Stomach (tissue), 19 donors: ENCODE measurements at regions of chr3 and their contacts with region 1.

Region 1: DNA sequence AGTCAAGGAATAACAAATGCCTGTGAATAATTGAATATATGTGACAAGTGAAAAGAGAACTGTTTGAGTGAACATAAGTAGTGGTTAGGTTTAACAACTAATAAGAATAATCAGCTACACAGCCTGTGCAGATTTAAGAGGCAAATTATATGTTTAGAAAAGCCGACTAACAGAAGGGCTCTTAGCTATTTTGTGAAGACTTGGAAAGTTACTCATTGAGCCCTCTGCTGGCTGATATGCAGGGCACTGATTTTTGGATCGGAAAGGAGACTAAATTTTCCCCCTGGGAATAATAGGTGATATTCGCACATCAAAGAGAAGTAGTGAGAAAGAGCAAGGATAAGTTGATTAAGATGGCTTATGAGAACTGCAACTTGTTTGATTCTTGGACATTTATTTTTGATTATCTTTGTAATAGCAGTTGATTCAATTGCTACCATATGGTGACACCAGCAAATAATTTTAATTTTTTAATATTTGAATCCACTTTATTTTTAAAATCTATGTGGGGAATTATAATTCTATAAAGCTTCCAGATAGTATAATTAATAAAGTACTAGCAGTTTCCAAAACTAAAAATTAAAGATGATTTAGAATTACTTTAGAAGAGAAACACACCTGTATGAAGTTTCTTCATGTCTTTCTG is 156.2 kb downstream of the NLGN1 start:
- DNase-seq: peak in 1 of 2 donors; percentile 61
- H3K4me3 ChIP-seq: no peak overlapping the region
- H3K27ac ChIP-seq: no peak overlapping the region
- H3K4me1 ChIP-seq: peaks cover 0 to 6% (median 3%) of the 10 kb centered on the region in 4 donors
- H3K27me3 ChIP-seq: no peaks in the 10 kb centered on the region
- CTCF ChIP-seq: peak in 4 of 7 experiments; percentile 40 to 68 (median 52)
- EP300 ChIP-seq: no peak
- POLR2A ChIP-seq: no peak

Region 2: DNA sequence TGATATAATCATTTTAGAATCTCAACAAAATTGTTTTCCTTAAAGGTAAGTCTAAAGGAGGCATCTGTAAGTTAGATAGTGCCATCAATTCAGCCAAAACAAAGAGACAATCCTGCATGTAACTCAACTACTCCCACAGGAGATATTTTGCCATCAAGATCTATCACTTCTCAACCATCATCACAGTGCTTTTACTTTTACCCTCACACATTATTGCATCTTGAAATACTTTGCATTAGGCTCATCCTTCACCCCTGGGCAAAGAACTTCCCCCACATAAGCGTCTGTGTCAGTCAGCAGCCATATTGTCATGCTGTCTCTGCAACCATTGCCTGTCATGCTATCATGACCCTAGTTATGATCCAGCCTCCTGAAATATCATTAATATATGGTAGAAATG is 211.1 kb before region 1 on chr3:
- intact Hi-C with region 1: no loop called
- DNase-seq: no peak
- H3K4me3 ChIP-seq: no peak overlapping the region
- H3K27ac ChIP-seq: no peak overlapping the region
- H3K4me1 ChIP-seq: no peaks in the 10 kb centered on the region
- H3K27me3 ChIP-seq: no peaks in the 10 kb centered on the region
- CTCF ChIP-seq: no peak
- EP300 ChIP-seq: no peak
- POLR2A ChIP-seq: no peak

Region 3: DNA sequence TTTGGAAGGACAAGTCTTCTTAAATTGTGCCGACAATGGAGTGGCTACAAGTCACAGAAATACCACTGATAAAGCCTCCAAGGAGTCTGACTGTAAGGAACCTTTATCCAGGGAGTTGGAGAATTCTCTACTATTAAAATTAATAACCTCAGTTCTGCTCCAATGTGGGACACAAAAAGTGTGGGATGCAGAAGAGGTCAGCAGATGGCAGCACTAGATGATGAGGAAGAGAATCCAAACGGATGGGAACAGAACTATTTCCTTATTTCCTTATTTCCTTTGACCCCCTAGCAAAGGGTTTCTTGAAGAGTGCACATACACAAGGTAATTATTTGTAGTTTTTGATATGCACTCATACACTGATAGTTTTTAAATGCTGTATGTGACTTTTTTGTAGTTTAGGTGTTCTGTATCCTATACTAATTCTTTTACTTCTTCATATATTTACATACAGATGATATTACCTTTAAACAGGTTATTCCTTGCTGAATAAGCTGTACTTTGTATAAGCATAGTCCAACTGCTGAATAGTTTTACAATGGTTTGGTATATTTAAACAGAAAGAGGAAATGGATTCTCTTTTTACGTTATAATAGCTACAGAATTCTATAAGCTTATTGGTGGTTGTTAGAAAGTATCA is 181.8 kb before region 1 on chr3:
- intact Hi-C with region 1: loop called (anchors 5 kb)
- DNase-seq: peak in 1 of 2 donors; percentile 68
- H3K4me3 ChIP-seq: no peak overlapping the region
- H3K27ac ChIP-seq: no peak overlapping the region
- H3K4me1 ChIP-seq: no peaks in the 10 kb centered on the region
- H3K27me3 ChIP-seq: no peaks in the 10 kb centered on the region
- CTCF ChIP-seq: peak in 4 of 7 experiments; percentile 46 to 52 (median 49)
- EP300 ChIP-seq: no peak
- POLR2A ChIP-seq: no peak